ENCODE measurements at regions of chr19 and their contacts with region 1.

Region 1: GRCh38 chr19:45670670-45671453 is 2.8 kb downstream of the GIPR start:
- DNase-seq: peak; percentile 89
- ATAC-seq: peak; percentile 39
- H3K4me3 Mint-ChIP-seq: peak overlapping the region; percentile 18
- H3K27ac Mint-ChIP-seq: no peak overlapping the region
- H3K4me1 Mint-ChIP-seq: peaks cover 24% of the 10 kb centered on the region
- H3K27me3 Mint-ChIP-seq: peaks cover 18% of the 10 kb centered on the region

Region 2: GRCh38 chr19:45615795-45616708 is 54.8 kb before region 1 on chr19:
- CTCF ChIA-PET with region 1: interaction called, 3 read pairs
- POLR2A ChIA-PET with region 1: interaction called, 6 read pairs
- intact Hi-C with region 1: loop called in 1 of 2 experiments (anchors 1 kb)
- DNase-seq: peak; percentile 95
- ATAC-seq: peak; percentile 86
- H3K4me3 Mint-ChIP-seq: no peak overlapping the region
- H3K27ac Mint-ChIP-seq: peak overlapping the region; percentile 65
- H3K4me1 Mint-ChIP-seq: peaks cover 24% of the 10 kb centered on the region
- H3K27me3 Mint-ChIP-seq: no peaks in the 10 kb centered on the region

Region 3: DNA sequence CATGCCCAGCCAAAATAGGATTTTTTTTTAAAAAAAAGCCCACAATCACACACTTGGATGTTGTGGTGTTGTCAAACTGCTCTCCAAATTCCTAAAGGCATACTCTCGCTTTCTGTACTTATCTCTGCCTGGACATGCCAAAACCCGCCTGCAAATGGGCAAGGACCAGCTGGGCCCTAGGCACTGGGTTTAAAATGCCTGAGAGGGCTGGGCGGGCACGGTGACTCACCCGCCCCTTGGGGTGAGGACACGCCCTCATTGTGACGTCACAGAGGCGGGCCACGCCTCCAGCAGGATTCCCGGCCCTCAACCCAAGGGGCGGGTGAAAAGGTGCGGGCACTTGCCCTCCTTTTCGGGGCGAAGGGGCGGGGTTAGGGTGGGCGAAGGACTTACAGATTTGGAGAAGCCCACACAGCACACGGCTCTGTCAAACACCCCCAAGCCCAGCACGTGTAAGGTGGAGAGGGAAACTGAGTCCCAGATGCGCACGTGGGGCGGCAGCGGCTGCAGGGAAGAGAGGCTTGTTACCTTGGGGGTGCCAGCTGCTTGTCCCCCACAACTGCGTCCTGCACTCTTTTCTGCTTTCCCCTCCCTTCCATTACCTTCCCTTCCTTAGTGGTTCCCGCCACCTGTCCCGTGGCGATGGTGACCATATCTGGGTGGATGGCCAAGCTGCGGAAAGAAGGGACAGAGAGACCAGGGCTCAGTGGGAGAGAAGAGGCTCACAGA is 38.2 kb before region 1 on chr19:
- CTCF ChIA-PET with region 1: no interaction called
- POLR2A ChIA-PET with region 1: no interaction called
- intact Hi-C with region 1: loop called in 1 of 2 experiments (anchors 1 kb)
- DNase-seq: peak; percentile 79
- ATAC-seq: peak; percentile 54
- H3K4me3 Mint-ChIP-seq: no peak overlapping the region
- H3K27ac Mint-ChIP-seq: peak overlapping the region; percentile 60
- H3K4me1 Mint-ChIP-seq: peaks cover 19% of the 10 kb centered on the region
- H3K27me3 Mint-ChIP-seq: no peaks in the 10 kb centered on the region

Region 4: DNA sequence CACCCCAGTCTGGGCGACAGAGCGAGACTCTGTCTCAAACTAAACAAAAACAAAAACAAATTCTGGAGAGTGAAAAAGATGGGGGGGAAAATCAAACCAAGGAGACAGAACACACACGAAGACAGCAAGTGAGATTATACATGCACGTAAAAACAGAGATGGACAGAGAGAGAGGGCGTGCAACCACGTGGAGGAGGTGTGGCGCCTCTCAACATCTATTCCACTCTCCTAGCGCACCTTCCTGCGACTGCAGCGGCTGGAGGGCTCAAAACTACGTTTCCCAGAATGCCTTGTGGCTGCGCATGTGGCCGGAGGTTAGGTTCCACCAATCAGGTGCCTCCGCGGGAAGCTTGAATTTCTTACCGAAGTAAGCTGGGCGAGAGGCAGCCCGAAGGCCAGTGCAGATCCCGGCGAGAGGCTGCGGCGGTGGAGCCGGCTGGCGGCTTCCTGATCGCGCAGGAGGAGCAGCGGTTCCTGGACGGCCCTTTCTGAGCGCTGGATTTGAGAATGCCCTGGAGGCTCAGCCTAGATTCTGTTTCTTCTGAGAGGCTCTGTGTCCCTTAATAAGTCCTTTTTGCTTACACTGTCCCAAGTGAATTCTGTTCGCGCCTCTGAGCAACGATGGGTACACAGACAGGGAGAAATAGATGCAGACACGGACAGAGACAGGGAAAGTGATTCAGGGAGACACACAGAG is 256.9 kb after region 1 on chr19:
- CTCF ChIA-PET with region 1: no interaction called
- POLR2A ChIA-PET with region 1: no interaction called
- intact Hi-C with region 1: no loop called
- DNase-seq: peak; percentile 96
- ATAC-seq: peak; percentile 100
- H3K4me3 Mint-ChIP-seq: peak overlapping the region; percentile 56
- H3K27ac Mint-ChIP-seq: peak overlapping the region; percentile 68
- H3K4me1 Mint-ChIP-seq: peaks cover 12% of the 10 kb centered on the region
- H3K27me3 Mint-ChIP-seq: peaks cover 7% of the 10 kb centered on the region

Measured in activated CD4-positive, alpha-beta T cell treated with anti-CD3 and anti-CD28 coated beads for 36 hours (primary cell).